ENCODE measurements at regions of chr12 and their contacts with region 1.

Region 1: GRCh38 chr12:110698171-110698902 is 9.4 kb upstream of the HVCN1 start:
- DNase-seq: peak; percentile 90
- ATAC-seq: peak; percentile 100
- H3K4me3 Mint-ChIP-seq: no peak overlapping the region
- H3K27ac Mint-ChIP-seq: peak overlapping the region; percentile 87
- H3K4me1 Mint-ChIP-seq: peaks cover 16% of the 10 kb centered on the region
- H3K27me3 Mint-ChIP-seq: no peaks in the 10 kb centered on the region
- CTCF ChIP-seq: peak; percentile 75

Region 2: DNA sequence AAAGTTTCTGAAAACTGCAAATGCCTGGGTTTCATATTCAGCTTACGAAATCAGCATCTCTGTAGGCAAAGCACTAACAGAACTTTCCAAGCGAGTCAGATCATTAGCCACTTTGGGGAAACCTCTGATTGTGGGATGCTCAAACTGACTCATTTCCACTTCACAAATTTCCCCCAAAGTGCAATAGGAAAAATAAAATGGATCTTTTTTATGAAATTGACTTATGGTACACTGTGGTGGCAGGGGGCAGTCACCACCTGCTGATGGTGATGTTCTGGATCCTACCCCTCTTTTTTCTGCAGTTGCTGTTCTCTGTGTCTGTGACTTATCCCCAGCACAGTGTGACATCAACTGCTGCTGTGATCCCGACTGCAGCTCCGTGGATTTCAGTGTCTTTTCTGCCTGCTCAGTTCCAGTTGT is 78.8 kb before region 1 on chr12:
- CTCF ChIA-PET with region 1: interaction called, 13 read pairs
- POLR2A ChIA-PET with region 1: interaction called, 4 read pairs
- intact Hi-C with region 1: loop called (anchors 5 kb)
- DNase-seq: peak; percentile 75
- ATAC-seq: peak; percentile 91
- H3K4me3 Mint-ChIP-seq: no peak overlapping the region
- H3K27ac Mint-ChIP-seq: peak overlapping the region; percentile 80
- H3K4me1 Mint-ChIP-seq: peaks cover 21% of the 10 kb centered on the region
- H3K27me3 Mint-ChIP-seq: no peaks in the 10 kb centered on the region
- CTCF ChIP-seq: peak; percentile 43

Region 3: DNA sequence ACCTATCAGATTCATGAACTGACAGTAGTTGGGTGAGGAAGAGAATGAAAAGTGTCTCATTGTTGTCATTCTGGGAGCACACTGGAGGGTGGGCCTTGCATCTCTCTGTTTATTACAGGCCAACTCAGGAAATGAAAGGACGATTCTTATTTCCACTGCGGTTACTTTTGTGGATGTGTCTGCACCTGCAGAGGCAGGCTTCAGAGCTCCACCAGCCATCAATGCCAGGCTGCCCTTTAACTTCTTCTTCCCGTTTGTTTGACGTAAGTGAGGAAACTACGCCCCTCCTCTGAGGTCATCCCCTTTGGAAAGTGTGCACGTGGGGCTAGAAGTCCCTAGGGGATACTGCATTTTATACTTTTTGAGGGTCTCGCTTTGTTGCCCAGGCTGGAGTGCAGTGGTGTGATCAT is 50.7 kb before region 1 on chr12:
- CTCF ChIA-PET with region 1: interaction called, 5 read pairs
- POLR2A ChIA-PET with region 1: no interaction called
- intact Hi-C with region 1: loop called (anchors 5 kb)
- DNase-seq: peak; percentile 61
- ATAC-seq: peak; percentile 96
- H3K4me3 Mint-ChIP-seq: no peak overlapping the region
- H3K27ac Mint-ChIP-seq: peak overlapping the region; percentile 80
- H3K4me1 Mint-ChIP-seq: peaks cover 34% of the 10 kb centered on the region
- H3K27me3 Mint-ChIP-seq: no peaks in the 10 kb centered on the region
- CTCF ChIP-seq: no peak

Region 4: GRCh38 chr12:110661337-110661972 is 36.9 kb before region 1 on chr12:
- CTCF ChIA-PET with region 1: interaction called, 7 read pairs
- POLR2A ChIA-PET with region 1: no interaction called
- intact Hi-C with region 1: loop called (anchors 5 kb)
- DNase-seq: peak; percentile 91
- ATAC-seq: peak; percentile 89
- H3K4me3 Mint-ChIP-seq: peak overlapping the region; percentile 85
- H3K27ac Mint-ChIP-seq: peak overlapping the region; percentile 96
- H3K4me1 Mint-ChIP-seq: peaks cover 48% of the 10 kb centered on the region
- H3K27me3 Mint-ChIP-seq: no peaks in the 10 kb centered on the region
- CTCF ChIP-seq: no peak